Naive thymus-derived CD4-positive, alpha-beta T cell (primary cell): ENCODE measurements at regions of chr5 and their contacts with region 1.

Region 1: DNA sequence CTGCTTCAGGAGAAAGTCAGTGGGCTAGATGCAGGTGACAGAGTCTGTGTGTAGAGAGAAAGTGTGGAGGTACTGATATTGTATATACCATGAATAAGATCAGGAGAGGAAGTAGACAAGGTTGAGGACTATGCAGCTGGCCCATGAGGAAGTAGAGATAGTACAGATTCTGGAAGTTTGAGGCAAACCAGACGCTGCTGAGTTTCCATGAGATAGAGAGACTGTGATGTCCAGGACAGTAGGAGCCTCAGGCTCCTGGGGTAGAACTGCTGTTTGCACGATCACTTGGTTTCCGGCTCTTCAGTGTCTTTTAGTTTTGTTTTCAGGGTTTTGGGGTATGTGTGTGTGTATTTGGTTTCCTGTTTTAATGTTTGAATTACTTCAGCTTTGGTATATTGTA is 13.6 kb downstream of the OTULINL start:
- DNase-seq: peak in 8 of 9 donors; percentile 29 to 69 (median 58)
- ATAC-seq: peak; percentile 72
- H3K4me3 ChIP-seq: peak overlapping the region; percentile 62
- H3K4me3 Mint-ChIP-seq: peak overlapping the region; percentile 76 to 86 (median 84)
- H3K27ac ChIP-seq: peak overlapping the region; percentile 70
- H3K27ac Mint-ChIP-seq: peak overlapping the region; percentile 94 to 99 (median 97)
- H3K4me1 ChIP-seq: peaks cover 59 to 66% of the 10 kb centered on the region in 2 donors
- H3K4me1 Mint-ChIP-seq: peaks cover 72 to 92% (median 85%) of the 10 kb centered on the region in 7 donors
- H3K27me3 ChIP-seq: no peaks in the 10 kb centered on the region
- H3K27me3 Mint-ChIP-seq: no peaks in the 10 kb centered on the region

Region 2: DNA sequence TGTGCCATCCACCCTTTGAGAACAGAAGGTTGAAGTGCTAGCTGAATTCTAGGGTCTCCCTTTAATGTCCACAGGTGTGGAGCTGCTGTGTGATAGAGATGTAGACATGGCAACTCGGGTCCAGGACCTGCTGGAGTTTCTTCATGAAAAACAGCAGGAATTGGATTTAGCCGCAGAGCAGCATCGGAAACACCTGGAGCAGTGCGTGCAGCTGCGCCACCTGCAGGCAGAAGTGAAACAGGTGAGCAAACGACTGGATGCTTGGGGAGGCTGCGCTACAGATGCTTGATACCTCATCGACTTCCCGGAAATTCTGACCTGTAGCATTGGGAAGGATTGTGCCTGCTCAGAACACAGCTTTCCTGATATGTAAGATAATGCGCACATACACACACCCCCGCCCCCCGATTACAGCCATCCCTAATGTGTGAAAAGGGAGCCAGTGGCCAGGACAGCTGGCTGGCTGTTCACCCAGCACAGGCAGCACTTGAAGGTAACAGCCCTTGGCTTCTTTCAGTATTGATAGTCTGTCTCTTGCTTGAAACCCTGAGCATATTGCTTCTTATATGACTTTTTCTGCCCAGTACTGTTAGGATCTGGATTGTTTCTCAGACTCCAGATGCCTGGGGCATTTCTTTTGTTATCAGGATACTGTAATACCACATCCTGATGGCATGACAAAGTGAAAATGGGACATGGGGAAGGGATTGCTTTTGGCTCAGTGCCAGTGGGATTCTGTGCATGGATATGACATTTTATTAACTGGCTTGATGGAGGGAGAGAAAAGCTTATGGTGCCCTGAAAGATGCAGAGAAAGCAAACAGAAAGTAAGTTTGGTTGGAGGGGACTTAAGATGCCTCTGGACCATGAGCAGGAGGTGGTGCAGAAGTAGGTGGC is 230.4 kb before region 1 on chr5:
- CTCF ChIA-PET with region 1: interaction called, 3 read pairs
- POLR2A ChIA-PET with region 1: no interaction called
- intact Hi-C with region 1: loop called in 1 of 2 experiments (anchors 1 kb)
- DNase-seq: no peak
- ATAC-seq: no peak
- H3K4me3 ChIP-seq: no peak overlapping the region
- H3K4me3 Mint-ChIP-seq: peak overlapping the region in 1 of 10 donors; percentile 48
- H3K27ac ChIP-seq: no peak overlapping the region
- H3K27ac Mint-ChIP-seq: peak overlapping the region in 4 of 9 donors; percentile 13 to 73 (median 46)
- H3K4me1 ChIP-seq: peaks cover 9 to 12% of the 10 kb centered on the region in 2 donors
- H3K4me1 Mint-ChIP-seq: peaks cover 17 to 55% (median 28%) of the 10 kb centered on the region in 7 donors
- H3K27me3 ChIP-seq: no peaks in the 10 kb centered on the region
- H3K27me3 Mint-ChIP-seq: no peaks in the 10 kb centered on the region

Region 3: GRCh38 chr5:14560091-14560595 is 35.0 kb before region 1 on chr5:
- CTCF ChIA-PET with region 1: no interaction called
- POLR2A ChIA-PET with region 1: interaction called, 3 read pairs
- intact Hi-C with region 1: loop called in 1 of 2 experiments (anchors 5 kb)
- DNase-seq: peak in 6 of 9 donors; percentile 19 to 47 (median 32)
- ATAC-seq: peak; percentile 81
- H3K4me3 ChIP-seq: peak overlapping the region; percentile 6
- H3K4me3 Mint-ChIP-seq: peak overlapping the region; percentile 56 to 89 (median 72)
- H3K27ac ChIP-seq: no peak overlapping the region
- H3K27ac Mint-ChIP-seq: peak overlapping the region; percentile 24 to 90 (median 82)
- H3K4me1 ChIP-seq: peaks cover 0 to 14% of the 10 kb centered on the region in 2 donors
- H3K4me1 Mint-ChIP-seq: peaks cover 12 to 39% (median 25%) of the 10 kb centered on the region in 7 donors
- H3K27me3 ChIP-seq: no peaks in the 10 kb centered on the region
- H3K27me3 Mint-ChIP-seq: peaks cover 0 to 3% (median 0%) of the 10 kb centered on the region in 5 donors

Region 4: DNA sequence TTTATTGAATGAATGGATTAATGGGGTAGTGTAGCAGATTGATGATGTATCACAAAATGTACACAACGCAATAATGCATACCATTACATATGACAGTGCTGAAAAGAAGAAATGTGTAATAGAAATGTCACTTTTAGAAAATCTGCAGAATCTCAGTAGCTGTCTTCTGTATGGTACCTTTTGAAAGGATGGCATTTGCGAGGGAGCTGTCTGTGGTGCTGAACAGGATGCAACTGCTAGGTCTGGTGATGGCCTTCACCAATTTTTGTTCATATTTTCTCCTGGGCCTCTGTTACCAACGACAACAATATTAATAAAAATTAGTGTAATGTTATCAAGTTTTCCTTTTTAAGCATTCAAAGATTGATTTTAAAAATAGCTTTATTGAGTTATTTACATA is 33.2 kb after region 1 on chr5:
- CTCF ChIA-PET with region 1: no interaction called
- POLR2A ChIA-PET with region 1: no interaction called
- intact Hi-C with region 1: loop called in 1 of 2 experiments (anchors 2 kb)
- DNase-seq: peak in 8 of 9 donors; percentile 18 to 55 (median 38)
- ATAC-seq: peak; percentile 61
- H3K4me3 ChIP-seq: no peak overlapping the region
- H3K4me3 Mint-ChIP-seq: no peak overlapping the region
- H3K27ac ChIP-seq: no peak overlapping the region
- H3K27ac Mint-ChIP-seq: no peak overlapping the region
- H3K4me1 ChIP-seq: no peaks in the 10 kb centered on the region
- H3K4me1 Mint-ChIP-seq: peaks cover 0 to 2% (median 0%) of the 10 kb centered on the region in 7 donors
- H3K27me3 ChIP-seq: no peaks in the 10 kb centered on the region
- H3K27me3 Mint-ChIP-seq: peaks cover 0 to 4% (median 0%) of the 10 kb centered on the region in 5 donors

Region 5: DNA sequence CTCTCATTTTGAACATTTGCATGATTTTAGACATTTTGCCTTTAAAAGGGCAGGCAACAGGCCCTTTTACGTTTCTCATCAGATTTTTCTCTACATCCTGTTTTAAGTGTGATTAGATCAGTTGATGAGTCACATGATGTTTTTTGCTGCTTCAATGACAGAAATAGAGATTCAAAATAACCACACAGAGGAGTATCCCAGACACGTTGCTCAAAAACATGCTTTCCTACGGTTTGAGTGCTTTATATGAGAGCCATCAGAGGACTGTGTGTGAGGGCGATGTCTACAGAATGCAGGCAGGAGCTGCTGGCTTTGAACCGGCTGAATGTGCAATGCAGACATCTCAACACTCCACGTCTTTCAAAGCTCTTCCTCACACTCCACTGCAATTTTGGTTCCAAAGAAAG is 111.4 kb after region 1 on chr5:
- CTCF ChIA-PET with region 1: no interaction called
- POLR2A ChIA-PET with region 1: interaction called, 4 read pairs
- intact Hi-C with region 1: loop called in 1 of 2 experiments (anchors 2 kb)
- DNase-seq: peak in 8 of 9 donors; percentile 33 to 88 (median 84)
- ATAC-seq: peak; percentile 96
- H3K4me3 ChIP-seq: peak overlapping the region; percentile 4
- H3K4me3 Mint-ChIP-seq: peak overlapping the region; percentile 74 to 94 (median 86)
- H3K27ac ChIP-seq: peak overlapping the region; percentile 72
- H3K27ac Mint-ChIP-seq: peak overlapping the region; percentile 96 to 100 (median 99)
- H3K4me1 ChIP-seq: peaks cover 34 to 75% of the 10 kb centered on the region in 2 donors
- H3K4me1 Mint-ChIP-seq: peaks cover 50 to 96% (median 86%) of the 10 kb centered on the region in 7 donors
- H3K27me3 ChIP-seq: no peaks in the 10 kb centered on the region
- H3K27me3 Mint-ChIP-seq: no peaks in the 10 kb centered on the region

Region 6: DNA sequence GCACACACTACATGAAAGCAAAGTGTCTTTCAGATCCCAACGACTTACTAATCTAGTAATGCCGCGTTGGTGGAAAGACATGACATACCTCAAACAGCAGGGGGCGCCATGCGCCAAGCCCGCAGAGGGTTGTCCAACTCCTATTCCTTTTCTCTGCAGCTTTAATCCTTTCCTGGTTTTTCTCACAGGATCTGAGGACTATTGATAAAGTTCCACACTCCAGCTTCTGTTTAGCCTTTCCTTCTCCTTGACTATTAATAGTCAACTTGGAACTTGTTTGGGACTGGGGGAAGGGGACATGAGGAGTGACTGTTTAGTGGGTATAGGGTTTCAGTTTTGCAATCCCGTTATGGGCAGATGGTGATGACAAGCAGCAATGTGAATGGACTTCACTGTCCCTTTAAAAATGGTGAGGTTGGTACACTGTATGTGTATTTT is 132.3 kb after region 1 on chr5:
- CTCF ChIA-PET with region 1: no interaction called
- POLR2A ChIA-PET with region 1: no interaction called
- intact Hi-C with region 1: no loop called
- DNase-seq: peak; percentile 47 to 79 (median 69)
- ATAC-seq: peak; percentile 77
- H3K4me3 ChIP-seq: no peak overlapping the region
- H3K4me3 Mint-ChIP-seq: no peak overlapping the region
- H3K27ac ChIP-seq: no peak overlapping the region
- H3K27ac Mint-ChIP-seq: peak overlapping the region in 5 of 9 donors; percentile 5 to 49 (median 42)
- H3K4me1 ChIP-seq: peaks cover 0 to 4% of the 10 kb centered on the region in 2 donors
- H3K4me1 Mint-ChIP-seq: peaks cover 8 to 22% (median 16%) of the 10 kb centered on the region in 7 donors
- H3K27me3 ChIP-seq: no peaks in the 10 kb centered on the region
- H3K27me3 Mint-ChIP-seq: no peaks in the 10 kb centered on the region

Region 7: DNA sequence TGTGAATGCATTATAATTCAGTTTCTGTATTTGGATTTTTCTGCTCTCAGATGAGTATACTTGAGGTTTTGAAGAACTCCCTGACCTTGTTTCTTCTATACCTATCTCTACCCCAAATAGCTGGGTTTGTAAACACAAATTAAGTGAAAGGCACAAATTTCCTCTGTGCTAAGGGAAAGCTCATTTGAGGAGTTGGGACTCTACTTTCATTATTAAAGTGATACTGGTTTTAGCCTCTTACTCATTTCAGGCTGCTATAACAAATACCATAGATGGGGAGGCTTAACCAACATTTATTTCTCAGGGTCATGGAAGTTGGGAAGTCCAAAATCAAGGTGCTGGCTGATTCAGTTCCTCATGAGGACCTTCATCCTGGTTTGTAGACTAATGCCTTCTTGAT is 373.6 kb after region 1 on chr5:
- CTCF ChIA-PET with region 1: no interaction called
- POLR2A ChIA-PET with region 1: no interaction called
- intact Hi-C with region 1: no loop called
- DNase-seq: no peak
- ATAC-seq: no peak
- H3K4me3 ChIP-seq: no peak overlapping the region
- H3K4me3 Mint-ChIP-seq: no peak overlapping the region
- H3K27ac ChIP-seq: no peak overlapping the region
- H3K27ac Mint-ChIP-seq: no peak overlapping the region
- H3K4me1 ChIP-seq: no peaks in the 10 kb centered on the region
- H3K4me1 Mint-ChIP-seq: no peaks in the 10 kb centered on the region
- H3K27me3 ChIP-seq: no peaks in the 10 kb centered on the region
- H3K27me3 Mint-ChIP-seq: peaks cover 0 to 6% (median 3%) of the 10 kb centered on the region in 5 donors

Region 8: GRCh38 chr5:14996997-14997396 is 401.8 kb after region 1 on chr5:
- CTCF ChIA-PET with region 1: no interaction called
- POLR2A ChIA-PET with region 1: no interaction called
- intact Hi-C with region 1: loop called in 1 of 2 experiments (anchors 10 kb)
- DNase-seq: no peak
- ATAC-seq: peak; percentile 29
- H3K4me3 ChIP-seq: no peak overlapping the region
- H3K4me3 Mint-ChIP-seq: no peak overlapping the region
- H3K27ac ChIP-seq: no peak overlapping the region
- H3K27ac Mint-ChIP-seq: no peak overlapping the region
- H3K4me1 ChIP-seq: peaks cover 5% of the 10 kb centered on the region in 2 donors
- H3K4me1 Mint-ChIP-seq: peaks cover 6 to 33% (median 12%) of the 10 kb centered on the region in 7 donors
- H3K27me3 ChIP-seq: no peaks in the 10 kb centered on the region
- H3K27me3 Mint-ChIP-seq: peaks cover 0 to 18% (median 0%) of the 10 kb centered on the region in 5 donors

Region 9: DNA sequence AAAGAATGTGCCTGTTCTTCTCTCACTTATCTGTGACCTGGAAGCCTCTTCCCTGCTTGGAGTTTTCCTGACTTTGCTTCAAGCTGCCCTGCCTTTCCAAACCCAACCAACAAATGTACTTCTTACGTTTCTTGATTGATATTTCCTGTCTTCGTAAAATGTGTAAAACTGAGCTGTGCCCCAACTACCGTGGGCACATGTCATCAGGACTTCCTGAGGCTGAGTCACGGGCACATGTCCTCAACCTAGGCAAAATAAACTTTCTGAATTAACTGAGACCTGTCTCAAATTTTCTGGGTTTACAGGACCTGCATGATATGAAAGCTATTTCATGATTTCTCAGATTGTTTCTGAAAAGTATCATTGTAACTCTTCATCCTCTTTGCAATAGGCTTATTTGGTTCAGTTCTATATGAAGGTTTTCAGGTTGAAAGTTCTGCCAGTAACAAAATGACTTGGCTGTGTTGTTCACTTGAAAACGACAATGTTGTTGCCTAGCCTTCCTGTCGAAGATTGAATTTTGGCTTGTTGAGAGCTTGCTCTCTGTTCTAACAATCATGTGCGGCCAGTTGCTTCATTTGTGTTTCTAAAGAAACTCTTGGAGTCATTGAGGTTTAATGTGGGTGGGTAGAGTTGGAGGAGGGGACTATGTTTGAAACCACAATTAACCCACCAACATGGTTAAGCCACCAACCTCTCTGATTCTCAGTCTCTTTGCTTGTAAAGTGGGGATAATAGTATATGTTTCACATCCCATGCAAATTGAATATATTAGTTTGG is 1050.4 kb after region 1 on chr5:
- CTCF ChIA-PET with region 1: no interaction called
- POLR2A ChIA-PET with region 1: no interaction called
- intact Hi-C with region 1: no loop called
- DNase-seq: no peak
- ATAC-seq: no peak
- H3K4me3 ChIP-seq: no peak overlapping the region
- H3K4me3 Mint-ChIP-seq: no peak overlapping the region
- H3K27ac ChIP-seq: no peak overlapping the region
- H3K27ac Mint-ChIP-seq: no peak overlapping the region
- H3K4me1 ChIP-seq: no peaks in the 10 kb centered on the region
- H3K4me1 Mint-ChIP-seq: no peaks in the 10 kb centered on the region
- H3K27me3 ChIP-seq: no peaks in the 10 kb centered on the region
- H3K27me3 Mint-ChIP-seq: peaks cover 0 to 7% (median 0%) of the 10 kb centered on the region in 5 donors